B cell (primary cell): ENCODE measurements at regions of chr16 and their contacts with region 1.

Region 1: DNA sequence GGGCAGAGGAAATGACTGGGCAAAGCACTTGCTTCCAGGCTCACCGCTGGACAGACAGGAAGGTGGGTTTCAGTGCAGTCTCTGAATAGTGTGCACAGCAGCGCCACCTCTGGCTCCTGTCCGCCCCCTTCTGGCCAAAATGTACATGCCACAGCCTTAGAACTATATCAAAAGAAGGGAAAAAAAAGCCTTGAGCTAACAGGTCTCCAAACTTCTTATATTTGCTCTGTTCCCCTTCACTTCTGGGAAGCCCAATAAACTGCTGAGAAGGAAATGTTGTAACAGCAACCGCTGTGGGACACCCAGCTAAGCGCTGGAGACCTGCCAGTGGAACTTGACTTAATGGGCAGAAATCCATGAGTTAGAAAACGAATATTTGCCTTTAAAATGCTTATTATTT is 17.5 kb downstream of the COG7 start:
- DNase-seq: peak; percentile 73
- ATAC-seq: peak; percentile 84
- H3K4me3 ChIP-seq: no peak overlapping the region
- H3K4me3 Mint-ChIP-seq: no peak overlapping the region
- H3K27ac ChIP-seq: no peak overlapping the region
- H3K27ac Mint-ChIP-seq: no peak overlapping the region
- H3K4me1 ChIP-seq: no peaks in the 10 kb centered on the region
- H3K4me1 Mint-ChIP-seq: peaks cover 3% of the 10 kb centered on the region
- H3K27me3 ChIP-seq: no peaks in the 10 kb centered on the region
- H3K27me3 Mint-ChIP-seq: no peaks in the 10 kb centered on the region
- CTCF ChIP-seq: peak; percentile 95

Region 2: DNA sequence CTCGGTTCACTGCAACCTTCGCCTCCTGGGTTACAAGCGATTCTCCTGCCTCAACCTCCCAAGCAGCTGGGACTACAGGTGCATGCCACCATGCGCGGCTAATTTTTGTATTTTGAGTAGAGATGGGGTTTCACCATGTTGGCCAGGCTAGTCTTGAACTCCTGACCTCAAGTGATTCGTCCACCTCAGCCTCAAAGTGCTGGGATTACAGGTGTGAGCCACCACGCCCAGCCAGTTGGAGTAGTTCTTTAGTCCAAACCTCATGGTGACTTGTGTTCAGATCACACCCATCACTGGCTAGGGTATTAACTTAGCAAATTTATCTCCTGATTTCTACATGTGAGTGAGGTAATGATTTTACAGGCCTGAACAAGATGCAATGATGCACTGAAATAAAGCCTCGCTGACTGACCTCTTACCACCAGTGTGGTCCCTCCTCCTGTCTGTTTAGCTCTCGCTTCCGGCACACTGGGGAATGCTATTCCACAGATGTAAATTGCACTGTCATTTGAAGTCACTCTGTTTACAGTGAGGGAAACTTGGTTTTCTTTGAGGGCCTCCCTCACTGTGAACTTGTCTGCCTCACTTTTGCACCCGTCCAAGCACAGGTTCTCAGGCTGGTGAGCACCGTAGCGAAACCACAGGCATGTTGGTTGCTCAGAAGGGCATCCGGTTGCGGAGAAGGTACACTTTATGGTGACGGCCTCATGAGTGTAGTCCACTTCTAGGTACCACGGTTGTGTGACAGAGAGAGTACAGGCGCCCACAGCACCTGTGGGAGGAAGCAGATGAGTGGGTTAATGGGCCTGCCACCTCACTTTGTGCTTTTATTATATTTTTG is 1788.6 kb before region 1 on chr16:
- CTCF ChIA-PET with region 1: no interaction called
- POLR2A ChIA-PET with region 1: no interaction called
- intact Hi-C with region 1: loop called (anchors 10 kb)
- DNase-seq: peak; percentile 77
- ATAC-seq: peak; percentile 86
- H3K4me3 ChIP-seq: peak overlapping the region in 2 of 5 experiments; percentile 2 to 8
- H3K4me3 Mint-ChIP-seq: peak overlapping the region; percentile 73
- H3K27ac ChIP-seq: peak overlapping the region; percentile 83 to 92
- H3K27ac Mint-ChIP-seq: peak overlapping the region; percentile 89
- H3K4me1 ChIP-seq: peaks cover 76 to 79% of the 10 kb centered on the region in 2 donors
- H3K4me1 Mint-ChIP-seq: peaks cover 69% of the 10 kb centered on the region
- H3K27me3 ChIP-seq: no peaks in the 10 kb centered on the region
- H3K27me3 Mint-ChIP-seq: no peaks in the 10 kb centered on the region
- CTCF ChIP-seq: no peak

Region 3: DNA sequence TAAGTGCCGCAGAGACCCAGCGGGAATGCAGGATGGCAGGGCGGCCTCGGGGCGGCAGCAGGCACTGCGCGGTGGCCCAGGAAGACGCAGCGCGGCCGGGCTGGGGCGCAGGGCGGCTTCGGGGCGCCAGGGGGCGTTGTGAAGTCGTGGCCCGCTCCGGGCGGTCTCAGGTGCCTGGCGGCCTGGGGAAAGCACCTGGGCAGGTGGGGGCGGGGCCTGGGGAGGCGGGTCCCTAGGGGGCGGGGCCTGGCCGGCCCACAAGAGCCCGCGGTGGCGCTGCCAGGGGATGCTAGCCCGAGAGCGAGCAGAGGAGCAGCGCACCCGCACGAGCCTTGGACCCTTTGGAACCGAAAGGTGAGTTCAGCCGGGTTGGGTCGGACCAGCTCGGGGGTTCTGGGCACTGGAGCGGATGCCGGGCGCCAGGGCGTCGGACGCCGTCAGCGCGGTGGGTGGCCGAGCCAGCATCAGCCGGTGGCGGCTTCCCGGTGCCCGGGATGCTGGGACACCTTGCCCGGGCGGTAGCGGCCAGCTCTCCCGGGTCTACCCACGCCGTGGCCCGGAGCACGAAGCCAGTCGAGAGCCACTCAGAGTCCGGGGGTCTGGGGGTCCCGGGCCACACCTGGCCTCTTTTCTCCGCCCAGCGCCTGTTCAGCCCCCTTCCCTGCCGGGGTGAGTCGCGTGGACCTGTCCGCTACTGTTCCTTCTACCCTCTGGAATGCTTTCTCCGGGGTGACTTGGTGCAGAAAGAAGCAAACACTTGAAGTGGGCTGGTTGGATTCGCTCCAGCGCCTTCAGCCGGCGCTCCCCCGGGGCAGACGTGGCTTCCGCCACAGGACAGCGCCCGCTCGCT is 252.8 kb before region 1 on chr16 and contains the start of gene SCNN1G:
- CTCF ChIA-PET with region 1: interaction called, 118 read pairs
- POLR2A ChIA-PET with region 1: no interaction called
- intact Hi-C with region 1: no loop called
- DNase-seq: peak; percentile 89
- ATAC-seq: peak; percentile 96
- H3K4me3 ChIP-seq: peak within 1 kb of the TSS in 4 of 5 experiments; percentile 19 to 63 (median 42)
- H3K4me3 Mint-ChIP-seq: peak within 1 kb of the TSS; percentile 82
- H3K27ac ChIP-seq: no peak within 1 kb of the TSS
- H3K27ac Mint-ChIP-seq: no peak within 1 kb of the TSS
- H3K4me1 ChIP-seq: peaks cover 19 to 24% of the 10 kb centered on the region in 2 donors
- H3K4me1 Mint-ChIP-seq: peaks cover 11% of the 10 kb centered on the region
- H3K27me3 ChIP-seq: peaks cover 0 to 48% (median 31%) of the 10 kb centered on the region in 4 experiments
- H3K27me3 Mint-ChIP-seq: peaks cover 46% of the 10 kb centered on the region
- CTCF ChIP-seq: peak; percentile 89
- total RNA-seq, gene SCNN1G: not detected in 2 replicates

Region 4: DNA sequence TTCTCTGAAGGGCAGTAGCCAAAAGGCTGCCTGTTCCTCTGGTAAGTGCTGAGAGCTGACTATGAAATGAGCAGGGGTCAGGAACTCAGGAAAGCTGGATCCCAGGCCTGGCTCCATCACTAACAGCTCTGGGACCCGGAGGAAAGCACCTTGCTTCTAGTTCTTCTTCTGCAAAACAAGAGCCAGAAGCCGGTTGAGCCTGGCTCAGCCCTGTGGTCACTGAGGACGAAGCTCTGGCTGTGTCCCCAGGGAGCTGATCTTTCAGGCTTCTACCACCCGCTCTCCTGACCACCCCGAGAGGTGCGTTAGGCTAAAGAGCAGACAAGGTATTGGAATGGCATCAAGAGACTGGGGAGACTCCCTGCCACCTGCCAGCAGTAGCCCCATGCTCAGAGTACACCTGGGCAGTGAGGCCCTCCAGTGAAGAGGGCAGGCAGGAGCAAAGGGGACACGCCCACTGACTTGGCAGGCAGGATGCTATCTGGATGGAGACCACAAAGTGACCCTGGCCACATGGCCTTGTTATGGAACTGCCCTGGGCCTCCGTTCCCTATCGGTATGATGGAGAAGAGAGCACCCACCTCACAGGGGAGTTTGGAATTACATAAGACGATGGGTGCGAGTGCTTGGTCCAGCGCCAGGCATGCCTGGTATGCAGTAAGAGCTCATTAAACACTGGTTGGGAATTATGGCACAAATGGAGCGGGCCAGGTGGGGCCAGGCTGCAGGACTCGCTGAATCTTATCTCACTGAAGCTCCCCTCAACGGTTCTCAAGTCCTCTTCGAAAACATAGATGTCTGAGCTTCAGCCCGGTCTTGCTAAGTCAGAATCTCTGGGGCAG is 43.9 kb before region 1 on chr16:
- CTCF ChIA-PET with region 1: no interaction called
- POLR2A ChIA-PET with region 1: no interaction called
- intact Hi-C with region 1: no loop called
- DNase-seq: no peak
- ATAC-seq: no peak
- H3K4me3 ChIP-seq: no peak overlapping the region
- H3K4me3 Mint-ChIP-seq: no peak overlapping the region
- H3K27ac ChIP-seq: no peak overlapping the region
- H3K27ac Mint-ChIP-seq: no peak overlapping the region
- H3K4me1 ChIP-seq: no peaks in the 10 kb centered on the region
- H3K4me1 Mint-ChIP-seq: no peaks in the 10 kb centered on the region
- H3K27me3 ChIP-seq: no peaks in the 10 kb centered on the region
- H3K27me3 Mint-ChIP-seq: no peaks in the 10 kb centered on the region
- CTCF ChIP-seq: no peak

Region 5: DNA sequence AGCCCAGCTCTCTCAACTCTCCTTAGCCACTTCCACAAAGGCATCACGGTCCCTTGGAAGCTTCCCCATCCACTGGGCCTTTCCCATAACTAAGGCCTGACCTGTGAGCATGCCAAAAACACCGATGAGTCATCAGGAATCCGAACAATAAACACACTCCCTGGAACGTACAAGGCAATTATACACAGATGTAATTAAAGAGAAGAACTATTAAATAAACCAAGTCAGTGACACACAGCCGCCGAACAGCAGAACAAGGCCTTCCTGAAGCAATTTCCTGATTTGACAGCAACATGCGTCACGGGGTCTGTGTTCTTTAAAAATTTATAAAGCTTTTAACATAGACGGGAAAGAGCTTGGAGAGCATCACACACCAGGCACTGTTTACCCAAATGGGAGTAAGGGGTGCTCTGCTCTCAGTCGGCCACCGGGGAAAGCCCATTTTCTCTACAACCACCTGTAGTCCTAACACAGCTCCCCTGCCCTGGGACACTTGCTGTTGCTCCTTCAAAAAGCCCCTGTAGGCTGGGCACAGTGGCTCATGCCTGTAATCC is 11.9 kb before region 1 on chr16:
- CTCF ChIA-PET with region 1: interaction called, 33 read pairs
- POLR2A ChIA-PET with region 1: no interaction called
- intact Hi-C with region 1: no loop called
- DNase-seq: no peak
- ATAC-seq: no peak
- H3K4me3 ChIP-seq: no peak overlapping the region
- H3K4me3 Mint-ChIP-seq: no peak overlapping the region
- H3K27ac ChIP-seq: no peak overlapping the region
- H3K27ac Mint-ChIP-seq: no peak overlapping the region
- H3K4me1 ChIP-seq: no peaks in the 10 kb centered on the region
- H3K4me1 Mint-ChIP-seq: no peaks in the 10 kb centered on the region
- H3K27me3 ChIP-seq: no peaks in the 10 kb centered on the region
- H3K27me3 Mint-ChIP-seq: no peaks in the 10 kb centered on the region
- CTCF ChIP-seq: no peak

Region 6: GRCh38 chr16:23595951-23596720 is 160.6 kb after region 1 on chr16 and contains the start of gene NDUFAB1:
- CTCF ChIA-PET with region 1: interaction called, 21 read pairs
- POLR2A ChIA-PET with region 1: no interaction called
- intact Hi-C with region 1: loop called (anchors 1 kb)
- DNase-seq: peak; percentile 92
- ATAC-seq: peak; percentile 99
- H3K4me3 ChIP-seq: peak within 1 kb of the TSS; percentile 72 to 92 (median 87)
- H3K4me3 Mint-ChIP-seq: peak within 1 kb of the TSS; percentile 86
- H3K27ac ChIP-seq: peak within 1 kb of the TSS; percentile 37 to 91
- H3K27ac Mint-ChIP-seq: peak within 1 kb of the TSS; percentile 76
- H3K4me1 ChIP-seq: peaks cover 15 to 19% of the 10 kb centered on the region in 2 donors
- H3K4me1 Mint-ChIP-seq: peaks cover 24% of the 10 kb centered on the region
- H3K27me3 ChIP-seq: no peaks in the 10 kb centered on the region
- H3K27me3 Mint-ChIP-seq: no peaks in the 10 kb centered on the region
- CTCF ChIP-seq: peak; percentile 98
- total RNA-seq, gene NDUFAB1: 30.5 and 33.6 TPM in 2 replicates